ENCODE measurements at regions of chrX and their contacts with region 1.

Region 1: GRCh38 chrX:13084611-13085010 is 40.2 kb upstream of the FAM9C start:
- DNase-seq: no peak

Region 2: DNA sequence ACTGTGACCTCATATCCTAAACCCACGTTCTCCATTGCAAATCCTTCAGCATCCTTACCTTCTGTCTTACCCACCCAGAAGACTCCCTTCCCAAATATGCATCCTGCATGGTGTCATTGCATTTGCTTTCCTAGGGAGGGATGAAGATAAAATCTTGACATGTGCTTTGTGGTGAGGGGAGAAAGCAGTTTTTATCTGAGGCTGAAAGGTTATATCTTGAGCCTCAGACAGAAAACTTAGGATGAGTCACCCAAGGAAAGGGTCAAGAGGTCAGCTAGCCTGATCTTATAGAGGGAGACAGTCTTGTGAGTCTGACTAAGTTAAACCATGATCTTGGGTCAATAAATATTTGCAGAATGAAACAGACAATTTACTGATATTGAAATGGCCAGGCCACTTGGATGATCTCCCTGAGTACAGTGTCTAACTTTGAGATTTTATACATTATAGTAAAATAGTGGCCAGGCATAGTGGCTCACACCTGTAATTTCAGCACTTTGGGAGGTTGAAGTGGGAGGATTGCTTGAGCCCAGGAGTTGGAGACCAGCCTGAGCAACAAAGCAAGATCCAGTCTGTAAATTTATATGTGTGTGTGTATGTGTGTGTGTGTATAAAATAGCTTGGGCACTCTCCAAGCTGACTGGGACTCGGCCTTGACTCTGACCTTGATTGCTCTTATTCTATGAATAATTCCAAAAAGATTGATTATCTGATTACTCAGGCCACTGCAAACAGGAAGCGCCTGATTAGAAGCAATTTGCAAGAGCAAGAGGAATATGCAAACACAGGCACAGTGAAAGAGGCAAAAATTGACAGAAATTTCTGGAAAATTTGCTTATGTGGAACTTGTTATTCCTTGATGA is 24.7 kb before region 1 on chrX:
- intact Hi-C with region 1: loop called (anchors 1 kb)
- DNase-seq: no peak

Measured in cardiac septum (tissue), 1 donor.